ENCODE measurements at regions of chr16 and their contacts with region 1.

Region 1: GRCh38 chr16:27449434-27450195 is 47.6 kb downstream of the IL21R start:
- DNase-seq: no peak
- H3K4me3 ChIP-seq: no peak overlapping the region
- H3K27ac ChIP-seq: no peak overlapping the region
- H3K4me1 ChIP-seq: peaks cover 0 to 17% (median 11%) of the 10 kb centered on the region in 3 donors
- H3K27me3 ChIP-seq: peaks cover 0 to 48% (median 0%) of the 10 kb centered on the region in 4 donors
- CTCF ChIP-seq: no peak
- POLR2A ChIP-seq: no peak

Region 2: GRCh38 chr16:27154705-27155521 is 294.7 kb before region 1 on chr16:
- intact Hi-C with region 1: loop called (anchors 10 kb)
- DNase-seq: no peak
- H3K4me3 ChIP-seq: no peak overlapping the region
- H3K27ac ChIP-seq: no peak overlapping the region
- H3K4me1 ChIP-seq: peaks cover 0 to 7% (median 0%) of the 10 kb centered on the region in 3 donors
- H3K27me3 ChIP-seq: no peaks in the 10 kb centered on the region
- CTCF ChIP-seq: peak; percentile 90 to 100 (median 94)
- POLR2A ChIP-seq: no peak

Region 3: DNA sequence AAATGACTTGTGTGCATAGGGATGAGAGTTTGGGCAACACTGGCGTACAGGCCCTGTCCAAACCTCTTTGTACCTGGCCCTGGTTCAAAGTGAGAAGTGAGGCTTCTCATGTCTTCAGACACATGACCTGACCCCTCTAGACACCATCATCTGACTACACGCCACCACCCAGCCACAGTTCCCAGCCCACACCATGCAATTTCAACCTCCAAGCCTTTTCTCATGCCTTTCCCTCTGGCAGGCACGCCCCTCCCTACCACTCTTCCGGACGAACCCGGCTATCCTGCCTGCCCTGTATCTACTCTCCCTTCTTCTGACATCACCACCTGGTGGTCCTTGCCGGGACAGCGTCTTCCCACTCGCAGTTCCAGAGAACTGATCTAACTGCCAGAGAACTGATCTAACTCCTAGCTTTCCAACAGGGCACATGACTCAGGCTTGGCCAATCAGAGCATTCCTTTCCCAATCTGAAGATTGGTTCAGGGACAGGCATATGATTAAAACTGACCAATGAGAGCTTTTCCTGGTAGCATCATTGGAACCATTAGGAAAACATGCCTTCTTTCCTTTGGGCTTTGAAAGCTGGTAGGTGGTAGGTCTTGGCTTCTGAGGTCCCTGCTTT is 74.7 kb before region 1 on chr16:
- intact Hi-C with region 1: loop called (anchors 5 kb)
- DNase-seq: no peak
- H3K4me3 ChIP-seq: peak overlapping the region in 2 of 4 donors; percentile 10 to 27
- H3K27ac ChIP-seq: peak overlapping the region in 2 of 4 donors; percentile 31 to 50
- H3K4me1 ChIP-seq: peaks cover 0 to 10% (median 0%) of the 10 kb centered on the region in 3 donors
- H3K27me3 ChIP-seq: no peaks in the 10 kb centered on the region
- CTCF ChIP-seq: peak in 4 of 6 experiments; percentile 24 to 60 (median 47)
- POLR2A ChIP-seq: peak in 1 of 4 donors; percentile 19

Region 4: DNA sequence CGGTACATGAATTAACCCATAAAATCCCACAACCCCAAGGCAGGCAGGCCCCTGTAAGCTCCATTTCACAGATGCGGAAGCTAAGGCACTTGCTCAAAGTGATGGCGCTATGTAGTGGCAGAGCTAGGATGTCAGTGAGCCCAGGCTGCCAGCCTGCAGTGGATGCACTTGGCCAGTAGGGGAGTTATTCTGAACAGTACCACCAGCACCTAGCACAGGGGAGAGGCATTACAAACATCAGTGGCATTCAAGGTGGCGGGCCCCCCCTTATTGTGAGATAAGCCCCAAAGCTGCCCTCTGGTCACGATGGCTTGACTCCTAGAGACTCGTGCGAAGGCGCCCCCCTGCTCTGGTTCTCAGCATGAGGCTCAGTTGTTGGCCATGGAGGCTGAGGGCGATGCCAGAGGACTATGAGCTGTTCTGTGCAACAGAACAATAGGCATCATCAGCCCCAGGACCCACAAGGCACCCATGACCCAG is 66.3 kb after region 1 on chr16:
- intact Hi-C with region 1: no loop called
- DNase-seq: no peak
- H3K4me3 ChIP-seq: no peak overlapping the region
- H3K27ac ChIP-seq: no peak overlapping the region
- H3K4me1 ChIP-seq: peaks cover 0 to 2% (median 0%) of the 10 kb centered on the region in 3 donors
- H3K27me3 ChIP-seq: no peaks in the 10 kb centered on the region
- CTCF ChIP-seq: peak in 5 of 6 experiments; percentile 27 to 70 (median 41)
- POLR2A ChIP-seq: no peak

Region 5: GRCh38 chr16:27639561-27640276 is 190.1 kb after region 1 on chr16:
- intact Hi-C with region 1: no loop called
- DNase-seq: no peak
- H3K4me3 ChIP-seq: no peak overlapping the region
- H3K27ac ChIP-seq: peak overlapping the region; percentile 76 to 91 (median 88)
- H3K4me1 ChIP-seq: peaks cover 13 to 72% (median 18%) of the 10 kb centered on the region in 3 donors
- H3K27me3 ChIP-seq: no peaks in the 10 kb centered on the region
- CTCF ChIP-seq: peak in 5 of 6 experiments; percentile 37 to 71 (median 50)
- POLR2A ChIP-seq: no peak

Measured in esophagus squamous epithelium (tissue), 5 donors.